Heart left ventricle (tissue), 16 donors: ENCODE measurements at regions of chr10 and their contacts with region 1.

Region 1: DNA sequence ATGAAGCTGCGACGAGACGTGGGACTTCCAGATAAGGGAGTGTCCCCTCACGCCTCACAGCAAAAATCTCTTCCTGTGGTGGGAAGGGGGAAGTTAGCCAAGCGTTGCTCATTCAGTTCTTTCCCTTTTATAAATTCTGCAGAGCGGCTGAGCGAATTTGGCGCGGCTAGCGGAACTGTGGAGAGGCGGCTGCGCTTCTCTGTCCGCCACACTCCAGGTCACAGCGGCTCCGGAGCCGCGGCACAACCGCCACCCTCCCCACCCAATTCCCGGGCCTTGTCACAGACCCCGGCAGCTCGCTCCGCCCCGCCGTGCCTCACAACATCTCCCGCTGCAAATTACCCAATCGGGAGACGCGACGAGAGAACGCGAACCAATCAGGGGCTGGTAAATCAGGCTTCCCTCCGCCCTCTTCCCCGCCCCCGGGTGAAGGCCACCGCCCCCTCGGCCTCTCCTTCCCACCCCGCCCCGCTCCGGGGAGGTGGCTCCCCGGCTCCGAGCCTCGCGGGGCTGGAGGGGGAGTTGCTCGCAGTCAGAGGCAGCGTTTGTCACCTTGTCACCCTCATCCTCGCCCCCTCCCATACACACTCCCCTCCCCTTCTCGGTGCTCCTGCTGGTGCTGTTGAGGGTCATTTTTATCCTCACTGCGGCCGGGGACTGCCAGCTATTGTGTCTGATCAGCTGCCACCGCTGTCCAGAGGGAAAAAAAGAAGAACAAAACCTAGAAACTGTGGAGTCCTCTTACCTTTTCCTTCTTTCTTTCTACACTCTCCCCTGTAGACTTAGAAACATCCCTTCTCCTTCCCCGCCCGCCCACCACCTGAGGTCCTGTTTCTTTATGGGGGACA is 918 bp upstream of the ARHGAP21 start:
- DNase-seq: peak; percentile 98 to 99 (median 98)
- ATAC-seq: peak; percentile 92 to 97 (median 94)
- H3K4me3 ChIP-seq: peak overlapping the region; percentile 59 to 96 (median 86)
- H3K27ac ChIP-seq: peak overlapping the region; percentile 93 to 99 (median 97)
- H3K4me1 ChIP-seq: peaks cover 0 to 33% (median 23%) of the 10 kb centered on the region in 12 donors
- H3K27me3 ChIP-seq: no peaks in the 10 kb centered on the region
- CTCF ChIP-seq: no peak
- POLR2A ChIP-seq: peak; percentile 76 to 97

Region 2: DNA sequence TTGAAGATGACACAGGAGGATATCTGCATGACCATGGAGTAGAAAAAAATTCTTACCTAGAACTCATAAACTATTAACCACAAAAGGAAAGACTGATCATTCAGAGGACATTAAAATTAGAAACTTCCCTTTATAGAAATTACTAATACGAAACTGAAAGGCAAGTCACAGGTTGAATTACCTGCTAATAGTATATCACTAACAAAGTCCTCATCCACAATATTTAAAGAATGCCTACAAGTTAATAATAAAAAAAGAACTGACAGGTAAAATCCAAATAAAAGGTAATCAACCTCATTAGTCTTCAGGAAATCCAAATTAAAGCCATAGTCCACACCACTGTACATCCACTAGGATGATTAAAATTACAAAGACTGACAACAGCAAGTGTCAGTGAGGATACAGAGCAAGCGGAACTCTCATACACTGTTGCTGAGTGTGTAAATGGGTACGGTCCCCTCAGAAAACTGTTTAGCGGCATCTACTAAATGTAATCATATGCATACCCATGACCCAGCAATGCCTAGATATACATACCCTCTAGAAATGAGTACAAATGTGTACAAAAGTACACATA is 72.1 kb before region 1 on chr10:
- intact Hi-C with region 1: loop called in 1 of 10 experiments (anchors 5 kb)
- DNase-seq: no peak
- ATAC-seq: no peak
- H3K4me3 ChIP-seq: no peak overlapping the region
- H3K27ac ChIP-seq: peak overlapping the region in 9 of 12 donors; percentile 4 to 54 (median 25)
- H3K4me1 ChIP-seq: peaks cover 0 to 43% (median 18%) of the 10 kb centered on the region in 12 donors
- H3K27me3 ChIP-seq: no peaks in the 10 kb centered on the region
- CTCF ChIP-seq: no peak
- POLR2A ChIP-seq: no peak

Region 3: DNA sequence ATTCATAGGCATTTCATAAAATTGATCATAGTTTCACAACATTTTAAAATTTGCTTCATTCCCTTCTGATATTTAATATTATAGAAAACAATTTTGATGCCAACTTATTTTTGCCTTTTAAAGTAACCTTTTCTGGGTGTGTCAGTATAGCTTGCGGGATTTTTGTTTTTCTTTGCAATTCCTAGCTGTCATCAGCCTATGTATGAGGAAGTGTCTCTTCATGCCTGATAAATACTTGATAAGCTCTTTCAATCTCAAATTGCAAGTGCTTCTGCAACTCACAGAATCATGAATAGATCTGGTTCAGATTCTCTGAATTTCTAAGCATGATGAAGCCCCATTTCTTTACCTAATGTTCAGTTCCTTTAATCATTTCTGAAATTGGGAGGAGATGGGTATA is 27.1 kb after region 1 on chr10:
- intact Hi-C with region 1: no loop called
- DNase-seq: no peak
- ATAC-seq: no peak
- H3K4me3 ChIP-seq: no peak overlapping the region
- H3K27ac ChIP-seq: no peak overlapping the region
- H3K4me1 ChIP-seq: no peaks in the 10 kb centered on the region
- H3K27me3 ChIP-seq: no peaks in the 10 kb centered on the region
- CTCF ChIP-seq: no peak
- POLR2A ChIP-seq: no peak

Region 4: GRCh38 chr10:24952707-24953645 is 228.4 kb after region 1 on chr10:
- intact Hi-C with region 1: loop called in 7 of 10 experiments (anchors 2 to 10 kb)
- DNase-seq: peak; percentile 47 to 79 (median 57)
- ATAC-seq: peak; percentile 18 to 65 (median 58)
- H3K4me3 ChIP-seq: peak overlapping the region; percentile 47 to 73 (median 64)
- H3K27ac ChIP-seq: peak overlapping the region; percentile 21 to 86 (median 79)
- H3K4me1 ChIP-seq: peaks cover 0 to 28% (median 12%) of the 10 kb centered on the region in 12 donors
- H3K27me3 ChIP-seq: no peaks in the 10 kb centered on the region
- CTCF ChIP-seq: peak in 10 of 12 donors; percentile 20 to 57 (median 46)
- POLR2A ChIP-seq: no peak

Region 5: GRCh38 chr10:24989867-24990266 is 265.3 kb after region 1 on chr10:
- intact Hi-C with region 1: loop called in 2 of 10 experiments (anchors 10 kb)
- DNase-seq: no peak
- ATAC-seq: no peak
- H3K4me3 ChIP-seq: no peak overlapping the region
- H3K27ac ChIP-seq: no peak overlapping the region
- H3K4me1 ChIP-seq: peaks cover 0 to 14% (median under 1%) of the 10 kb centered on the region in 12 donors
- H3K27me3 ChIP-seq: no peaks in the 10 kb centered on the region
- CTCF ChIP-seq: peak in 8 of 12 donors; percentile 11 to 53 (median 38)
- POLR2A ChIP-seq: no peak

Region 6: DNA sequence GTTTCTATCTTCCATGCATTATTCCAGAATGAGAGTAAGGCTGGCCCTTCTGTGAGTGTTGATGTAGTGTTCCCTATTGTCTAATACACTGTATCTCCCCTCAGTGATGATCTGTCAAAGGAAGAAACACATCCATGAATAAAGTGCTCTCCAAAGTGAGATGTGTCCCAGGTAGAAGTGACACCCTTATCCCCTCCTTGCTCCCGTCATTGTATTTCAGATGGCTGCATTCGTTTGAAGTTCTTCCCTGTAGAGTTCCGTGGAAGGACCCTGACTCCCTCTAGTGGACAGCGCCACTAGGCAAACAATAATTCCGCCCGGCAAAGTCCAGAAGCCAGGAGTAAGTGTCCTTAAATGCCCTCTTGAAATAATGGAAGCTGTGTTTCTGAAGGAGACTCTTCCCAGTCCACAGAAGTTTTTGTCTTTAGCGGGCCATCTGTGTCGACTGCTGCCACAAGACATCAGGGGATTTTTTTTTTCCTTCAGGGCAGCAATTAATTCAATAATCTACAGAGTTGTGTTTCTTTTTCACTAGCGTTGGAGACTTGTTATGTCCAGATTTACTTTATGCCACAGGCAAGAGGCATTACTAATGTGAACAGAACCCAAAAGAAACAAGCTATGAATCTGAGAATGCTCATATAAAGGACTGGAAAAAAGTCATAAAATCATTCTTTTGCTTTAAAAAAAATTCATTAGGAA is 356.4 kb after region 1 on chr10:
- intact Hi-C with region 1: loop called in 6 of 10 experiments (anchors 5 to 10 kb)
- DNase-seq: peak; percentile 68 to 88 (median 86)
- ATAC-seq: peak; percentile 88 to 98 (median 96)
- H3K4me3 ChIP-seq: peak overlapping the region in 1 of 12 donors; percentile 22
- H3K27ac ChIP-seq: peak overlapping the region in 8 of 12 donors; percentile 23 to 68 (median 53)
- H3K4me1 ChIP-seq: peaks cover 0 to 26% (median 8%) of the 10 kb centered on the region in 12 donors
- H3K27me3 ChIP-seq: no peaks in the 10 kb centered on the region
- CTCF ChIP-seq: peak; percentile 82 to 97 (median 90)
- POLR2A ChIP-seq: no peak